ENCODE measurements at regions of chr12 and their contacts with region 1.

Region 1: DNA sequence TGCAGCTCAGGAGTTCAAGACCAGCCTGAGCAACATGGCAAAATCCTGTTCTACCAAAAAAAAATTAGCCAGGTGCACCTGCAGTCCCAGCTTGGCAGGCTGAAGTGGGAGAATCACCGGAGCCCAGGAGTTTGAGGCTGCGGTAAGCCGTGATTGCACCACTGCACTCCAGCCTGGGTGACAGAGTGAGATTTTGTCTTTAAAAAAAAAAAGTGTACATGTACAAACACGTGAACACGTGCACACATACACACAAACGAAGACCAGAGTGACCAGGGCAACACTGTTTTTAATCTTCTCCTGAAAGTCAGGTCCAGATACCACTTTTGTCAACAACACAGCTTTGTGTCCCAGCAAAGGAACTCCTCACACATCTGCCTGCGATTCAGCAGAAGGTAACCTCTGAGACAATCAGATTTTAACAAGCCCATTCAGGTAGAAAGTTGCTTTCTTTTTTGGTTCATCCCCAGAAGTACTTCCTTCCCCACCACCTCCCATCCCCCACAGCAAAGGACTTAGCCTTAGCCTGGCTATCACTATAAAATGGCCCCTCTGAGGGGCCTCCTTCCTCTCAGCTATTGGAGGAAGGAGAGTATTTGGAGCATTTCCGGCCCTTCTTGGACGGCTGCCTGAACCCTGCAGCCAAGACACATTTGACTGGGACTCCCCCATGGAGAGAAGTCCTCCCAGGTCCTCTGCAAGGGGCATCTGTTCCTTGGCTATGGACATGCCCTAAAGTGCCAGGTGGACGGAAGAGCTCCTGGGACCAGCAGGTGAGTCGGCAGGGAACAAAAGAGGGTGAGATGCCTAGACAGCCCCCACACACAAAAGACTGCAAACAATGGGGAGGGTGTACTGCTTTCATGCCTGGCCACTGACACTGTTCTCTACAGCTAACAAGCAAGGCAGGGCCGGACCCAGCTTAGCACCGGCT is 9.8 kb downstream of the CTDSP2 start:
- DNase-seq: peak; percentile 63
- ATAC-seq: peak; percentile 29
- H3K4me3 ChIP-seq: peak overlapping the region in 4 of 5 experiments; percentile 3 to 38 (median 12)
- H3K4me3 Mint-ChIP-seq: peak overlapping the region; percentile 79
- H3K27ac ChIP-seq: peak overlapping the region; percentile 62 to 81
- H3K27ac Mint-ChIP-seq: peak overlapping the region; percentile 87
- H3K4me1 ChIP-seq: peaks cover 94 to 99% of the 10 kb centered on the region in 2 donors
- H3K4me1 Mint-ChIP-seq: peaks cover 93% of the 10 kb centered on the region
- H3K27me3 ChIP-seq: no peaks in the 10 kb centered on the region
- H3K27me3 Mint-ChIP-seq: no peaks in the 10 kb centered on the region
- CTCF ChIP-seq: no peak

Region 2: GRCh38 chr12:57740656-57741412 is 95.9 kb before region 1 on chr12:
- CTCF ChIA-PET with region 1: no interaction called
- POLR2A ChIA-PET with region 1: no interaction called
- intact Hi-C with region 1: no loop called
- DNase-seq: peak; percentile 78
- ATAC-seq: peak; percentile 29
- H3K4me3 ChIP-seq: peak overlapping the region; percentile 43 to 79 (median 62)
- H3K4me3 Mint-ChIP-seq: peak overlapping the region; percentile 84
- H3K27ac ChIP-seq: peak overlapping the region; percentile 45 to 70
- H3K27ac Mint-ChIP-seq: peak overlapping the region; percentile 83
- H3K4me1 ChIP-seq: peaks cover 43 to 56% of the 10 kb centered on the region in 2 donors
- H3K4me1 Mint-ChIP-seq: peaks cover 52% of the 10 kb centered on the region
- H3K27me3 ChIP-seq: no peaks in the 10 kb centered on the region
- H3K27me3 Mint-ChIP-seq: no peaks in the 10 kb centered on the region
- CTCF ChIP-seq: no peak

Region 3: DNA sequence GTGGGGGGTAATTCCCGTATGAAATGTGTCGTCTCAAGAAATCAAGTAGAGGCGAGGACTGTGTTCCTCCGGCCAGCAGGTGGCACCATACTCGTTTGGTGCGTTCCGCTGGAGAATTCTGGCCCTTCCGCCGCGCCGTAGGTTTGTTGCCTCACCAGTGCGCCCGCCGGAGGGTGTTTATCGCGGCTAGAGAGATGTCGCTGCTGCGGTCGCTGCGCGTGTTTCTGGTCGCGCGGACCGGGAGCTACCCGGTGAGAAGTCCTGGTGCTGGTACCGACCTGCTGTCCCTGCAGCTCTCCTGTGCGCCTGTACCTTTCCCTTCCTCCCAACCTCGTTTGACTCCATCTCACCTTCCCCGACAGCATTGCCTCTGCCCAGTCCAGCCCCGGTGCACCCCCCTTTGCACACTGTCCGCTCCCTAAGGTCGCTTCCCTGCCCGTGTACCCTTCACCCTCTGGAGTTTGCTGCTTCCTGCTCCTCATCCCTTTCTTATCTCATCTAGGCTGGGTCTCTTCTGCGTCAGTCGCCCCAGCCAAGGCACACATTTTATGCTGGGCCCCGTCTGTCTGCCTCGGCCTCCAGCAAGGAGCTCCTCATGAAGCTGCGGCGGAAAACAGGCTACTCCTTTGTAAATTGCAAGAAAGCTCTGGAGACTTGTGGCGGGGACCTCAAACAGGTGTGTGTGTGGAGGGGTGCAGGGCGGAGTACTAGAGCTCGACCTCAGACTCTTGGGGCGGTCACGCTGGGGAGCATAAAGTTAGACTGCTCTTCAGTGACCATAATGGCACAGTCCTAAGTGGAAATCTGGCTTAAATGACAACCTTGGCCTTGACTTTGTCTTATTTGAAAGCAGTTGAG is 53.9 kb before region 1 on chr12 and contains the start of gene TSFM:
- CTCF ChIA-PET with region 1: interaction called, 13 read pairs
- POLR2A ChIA-PET with region 1: no interaction called
- intact Hi-C with region 1: no loop called
- DNase-seq: peak; percentile 96
- ATAC-seq: peak; percentile 99
- H3K4me3 ChIP-seq: peak within 1 kb of the TSS; percentile 83 to 100 (median 98)
- H3K4me3 Mint-ChIP-seq: peak within 1 kb of the TSS; percentile 100
- H3K27ac ChIP-seq: peak within 1 kb of the TSS; percentile 45 to 77
- H3K27ac Mint-ChIP-seq: peak within 1 kb of the TSS; percentile 96
- H3K4me1 ChIP-seq: peaks cover 9 to 17% of the 10 kb centered on the region in 2 donors
- H3K4me1 Mint-ChIP-seq: peaks cover 18% of the 10 kb centered on the region
- H3K27me3 ChIP-seq: no peaks in the 10 kb centered on the region
- H3K27me3 Mint-ChIP-seq: no peaks in the 10 kb centered on the region
- CTCF ChIP-seq: peak; percentile 94
- total RNA-seq, gene TSFM: 20.6 and 20.9 TPM in 2 replicates

Region 4: DNA sequence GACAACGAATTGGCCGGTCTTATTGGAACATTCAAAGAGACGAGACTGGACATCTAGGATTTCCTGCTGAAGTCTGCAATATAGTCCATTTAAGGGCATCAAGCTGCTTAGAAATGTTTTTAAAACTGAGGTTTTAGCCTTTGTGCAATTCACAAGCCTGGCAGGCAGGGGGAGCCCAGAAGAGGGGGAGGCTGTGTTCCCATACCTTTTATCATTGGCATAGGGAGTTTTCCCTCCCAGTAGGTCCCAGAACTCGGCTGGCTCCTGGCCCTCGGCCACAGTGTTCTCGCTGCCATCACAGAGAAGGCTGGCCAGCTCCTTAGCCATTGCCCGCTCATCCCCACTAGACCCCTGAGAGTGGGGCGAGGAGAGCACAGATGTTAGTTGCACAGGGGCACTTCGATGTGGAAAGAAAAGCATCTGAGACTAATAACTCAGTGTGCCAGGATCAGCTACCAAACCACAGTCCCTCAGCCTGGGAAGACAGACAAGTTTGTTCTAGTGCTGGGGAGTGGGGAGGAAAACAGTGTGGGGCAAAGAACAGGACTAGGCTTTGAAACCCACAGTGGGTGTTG is 33.3 kb before region 1 on chr12:
- CTCF ChIA-PET with region 1: interaction called, 26 read pairs
- POLR2A ChIA-PET with region 1: no interaction called
- intact Hi-C with region 1: no loop called
- DNase-seq: peak; percentile 45
- ATAC-seq: peak; percentile 39
- H3K4me3 ChIP-seq: no peak overlapping the region
- H3K4me3 Mint-ChIP-seq: no peak overlapping the region
- H3K27ac ChIP-seq: no peak overlapping the region
- H3K27ac Mint-ChIP-seq: no peak overlapping the region
- H3K4me1 ChIP-seq: no peaks in the 10 kb centered on the region
- H3K4me1 Mint-ChIP-seq: no peaks in the 10 kb centered on the region
- H3K27me3 ChIP-seq: no peaks in the 10 kb centered on the region
- H3K27me3 Mint-ChIP-seq: no peaks in the 10 kb centered on the region
- CTCF ChIP-seq: peak; percentile 78

Region 5: DNA sequence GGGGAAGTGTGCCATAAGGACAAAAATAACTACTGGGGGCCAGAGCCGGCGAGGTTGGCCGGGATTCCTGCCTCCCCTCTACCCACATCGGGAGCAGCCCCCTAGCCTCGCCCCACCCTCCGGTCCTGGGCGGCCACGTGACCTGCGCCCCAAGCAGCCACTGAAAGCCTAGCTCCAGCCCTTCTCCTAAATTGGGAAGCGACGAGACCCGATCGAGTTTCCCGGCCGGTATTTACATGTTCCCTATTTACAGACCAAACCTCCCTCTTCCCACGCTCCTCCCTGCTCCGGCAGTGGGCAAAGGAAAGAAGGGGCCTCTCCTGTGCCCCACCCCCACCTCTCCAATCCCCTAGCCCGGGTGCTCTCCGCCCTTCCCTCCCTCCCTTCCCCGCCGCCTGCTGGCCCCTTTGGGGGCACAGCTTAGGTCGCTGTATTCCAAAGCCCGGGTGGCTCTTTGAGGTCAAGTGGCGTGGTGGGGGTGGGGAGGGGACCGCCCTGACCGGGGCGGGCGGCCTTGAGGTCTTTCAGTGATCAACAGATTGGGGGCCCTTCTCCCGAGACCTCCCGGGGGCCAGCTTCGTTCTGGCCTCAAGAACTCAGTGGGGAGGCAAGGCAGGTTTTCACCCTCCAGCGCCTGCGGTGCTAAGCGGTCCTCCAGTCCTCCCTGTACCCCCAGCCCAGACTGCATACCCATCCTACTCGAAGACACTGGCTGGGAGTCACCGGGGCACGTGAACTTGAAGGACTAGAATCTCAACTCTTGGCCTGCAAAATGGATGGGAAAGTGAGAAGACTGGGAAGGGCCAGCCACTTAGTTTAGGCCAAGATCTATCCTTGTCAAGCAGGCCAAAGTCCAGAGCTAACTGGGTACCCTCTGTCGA is 16.2 kb after region 1 on chr12:
- CTCF ChIA-PET with region 1: interaction called, 14 read pairs
- POLR2A ChIA-PET with region 1: interaction called, 3 read pairs
- intact Hi-C with region 1: no loop called
- DNase-seq: no peak
- ATAC-seq: no peak
- H3K4me3 ChIP-seq: peak overlapping the region in 1 of 5 experiments; percentile 11
- H3K4me3 Mint-ChIP-seq: peak overlapping the region; percentile 41
- H3K27ac ChIP-seq: no peak overlapping the region
- H3K27ac Mint-ChIP-seq: no peak overlapping the region
- H3K4me1 ChIP-seq: peaks cover 25 to 33% of the 10 kb centered on the region in 2 donors
- H3K4me1 Mint-ChIP-seq: peaks cover 34% of the 10 kb centered on the region
- H3K27me3 ChIP-seq: peaks cover 0 to 31% (median 11%) of the 10 kb centered on the region in 4 experiments
- H3K27me3 Mint-ChIP-seq: peaks cover 42% of the 10 kb centered on the region
- CTCF ChIP-seq: no peak

Region 6: DNA sequence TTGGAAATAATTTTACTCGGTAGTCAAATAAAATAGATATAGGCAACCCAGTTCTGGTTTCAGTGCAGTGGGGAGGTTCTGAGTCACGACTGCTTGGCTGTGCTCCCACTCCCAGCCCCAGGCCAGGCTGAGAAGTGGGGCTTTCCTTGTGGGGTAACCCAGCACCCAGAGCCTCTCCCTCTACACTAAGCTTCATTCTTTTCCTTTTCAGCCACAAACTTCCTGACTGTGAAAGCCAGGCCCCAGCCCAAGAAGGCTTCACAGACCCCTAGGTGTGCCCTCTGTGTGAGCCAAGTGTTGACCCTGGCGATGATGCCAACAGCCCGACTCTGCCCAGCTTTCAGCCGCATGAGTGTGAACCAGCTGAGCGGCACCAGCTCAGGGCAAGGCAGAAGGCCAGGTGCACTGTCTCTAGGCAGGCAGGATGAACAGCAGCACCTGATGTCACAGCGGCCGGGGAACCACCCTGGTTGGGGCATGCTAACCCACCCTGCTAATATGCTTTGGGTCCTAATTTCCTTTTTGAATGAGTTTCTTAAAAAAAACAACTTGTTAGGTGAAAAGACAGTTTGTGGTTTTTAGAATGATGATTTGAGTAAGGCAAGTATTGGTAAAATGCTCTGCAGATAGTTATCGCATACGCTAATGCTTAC is 62.4 kb after region 1 on chr12:
- CTCF ChIA-PET with region 1: interaction called, 182 read pairs
- POLR2A ChIA-PET with region 1: interaction called, 13 read pairs
- intact Hi-C with region 1: no loop called
- DNase-seq: peak; percentile 93
- ATAC-seq: peak; percentile 82
- H3K4me3 ChIP-seq: peak overlapping the region in 3 of 5 experiments; percentile 29 to 39 (median 34)
- H3K4me3 Mint-ChIP-seq: peak overlapping the region; percentile 88
- H3K27ac ChIP-seq: peak overlapping the region; percentile 96 to 97
- H3K27ac Mint-ChIP-seq: peak overlapping the region; percentile 100
- H3K4me1 ChIP-seq: peaks cover 57 to 60% of the 10 kb centered on the region in 2 donors
- H3K4me1 Mint-ChIP-seq: peaks cover 58% of the 10 kb centered on the region
- H3K27me3 ChIP-seq: no peaks in the 10 kb centered on the region
- H3K27me3 Mint-ChIP-seq: no peaks in the 10 kb centered on the region
- CTCF ChIP-seq: no peak

Measured in B cell (primary cell).